Activated naive CD4-positive, alpha-beta T cell treated with anti-CD3 and anti-CD28 coated beads, Interleukin-2, amount 10 ng/mL, durations not matched to agents 7 days and 5 days (primary cell): ENCODE measurements at regions of chr15 and their contacts with region 1.

Region 1: DNA sequence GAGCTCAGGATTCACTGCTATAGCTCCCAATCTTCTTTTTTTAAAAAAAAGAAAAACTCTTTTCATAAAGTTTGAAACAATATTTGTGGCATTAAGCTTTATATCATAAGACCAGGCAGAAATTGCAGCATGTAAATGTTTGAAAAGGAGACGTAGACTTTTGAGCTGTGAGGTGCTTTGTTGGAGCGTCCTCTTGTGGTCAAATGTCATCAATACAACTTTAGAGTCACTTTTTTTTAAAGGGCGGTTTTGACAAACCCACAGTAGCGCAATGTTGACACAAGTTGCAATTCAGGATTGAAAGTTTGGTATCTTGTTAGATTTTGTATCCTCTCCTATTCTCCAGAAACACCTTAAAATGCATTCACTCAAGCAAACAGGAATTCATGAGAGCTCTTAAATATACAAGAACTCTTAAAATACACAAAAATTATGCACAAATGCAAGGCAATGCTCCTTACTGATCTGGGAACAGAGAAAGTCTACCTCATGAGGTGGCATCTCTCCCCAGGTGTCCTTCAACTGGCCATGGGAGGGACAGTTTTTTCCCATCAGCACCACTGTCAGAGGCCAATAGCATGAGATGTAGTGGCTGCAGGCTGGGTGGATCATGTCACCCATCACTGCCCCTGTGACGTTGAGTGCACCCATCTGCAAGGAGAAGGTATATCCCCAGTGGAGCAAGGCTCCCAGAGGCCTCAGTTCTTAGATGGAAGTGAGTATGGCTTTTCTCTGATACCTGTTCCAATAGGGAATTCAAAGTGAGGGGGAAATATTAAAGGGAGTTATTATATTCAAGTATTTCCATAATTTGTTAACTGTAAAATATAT is 70.7 kb downstream of the ANXA2 start:
- DNase-seq: peak; percentile 49
- H3K4me3 Mint-ChIP-seq: no peak overlapping the region
- H3K27ac Mint-ChIP-seq: no peak overlapping the region
- H3K4me1 Mint-ChIP-seq: peaks cover 11% of the 10 kb centered on the region
- H3K27me3 Mint-ChIP-seq: peaks cover 55% of the 10 kb centered on the region

Region 2: GRCh38 chr15:59688841-59689625 is 638.0 kb before region 1 on chr15 and contains the start of gene BNIP2:
- CTCF ChIA-PET with region 1: interaction called, 14 read pairs
- DNase-seq: peak; percentile 100
- H3K4me3 Mint-ChIP-seq: peak within 1 kb of the TSS; percentile 85
- H3K27ac Mint-ChIP-seq: peak within 1 kb of the TSS; percentile 99
- H3K4me1 Mint-ChIP-seq: peaks cover 52% of the 10 kb centered on the region
- H3K27me3 Mint-ChIP-seq: no peaks in the 10 kb centered on the region

Region 3: DNA sequence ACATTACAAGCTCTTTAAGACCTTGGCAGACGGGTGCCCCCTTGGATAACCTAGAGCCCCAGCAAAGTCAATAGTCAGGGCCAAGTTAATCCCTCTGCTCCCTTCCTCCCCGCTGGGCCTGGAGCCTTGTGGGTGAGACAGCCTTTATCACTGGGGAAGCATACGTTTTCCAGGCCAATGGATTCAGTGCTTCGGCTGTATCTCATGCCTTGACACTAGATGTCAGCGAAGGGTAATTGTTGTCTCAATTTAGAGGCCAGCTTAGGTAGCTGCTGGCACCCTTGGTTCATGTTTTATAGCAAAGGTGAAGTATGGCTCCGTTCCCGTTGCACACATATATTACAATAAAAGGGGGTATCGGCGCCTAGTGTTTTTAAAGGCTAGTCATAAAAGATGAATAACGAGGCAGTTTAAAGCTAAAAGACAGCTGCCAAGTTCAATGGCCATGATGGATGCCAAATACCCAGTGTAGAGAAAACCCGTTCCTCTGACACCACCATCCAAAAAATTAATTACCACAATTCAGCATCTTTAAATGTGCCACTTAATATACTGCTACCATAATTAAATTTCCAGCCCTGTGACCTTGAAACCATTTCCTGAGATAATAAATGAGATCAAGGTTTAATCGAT is 585.6 kb before region 1 on chr15:
- CTCF ChIA-PET with region 1: interaction called, 10 read pairs
- DNase-seq: peak; percentile 26
- H3K4me3 Mint-ChIP-seq: no peak overlapping the region
- H3K27ac Mint-ChIP-seq: no peak overlapping the region
- H3K4me1 Mint-ChIP-seq: no peaks in the 10 kb centered on the region
- H3K27me3 Mint-ChIP-seq: peaks cover 17% of the 10 kb centered on the region

Region 4: GRCh38 chr15:59917504-59918157 is 409.4 kb before region 1 on chr15:
- CTCF ChIA-PET with region 1: interaction called, 73 read pairs
- DNase-seq: peak; percentile 82
- H3K4me3 Mint-ChIP-seq: no peak overlapping the region
- H3K27ac Mint-ChIP-seq: no peak overlapping the region
- H3K4me1 Mint-ChIP-seq: peaks cover 34% of the 10 kb centered on the region
- H3K27me3 Mint-ChIP-seq: peaks cover 21% of the 10 kb centered on the region

Region 5: DNA sequence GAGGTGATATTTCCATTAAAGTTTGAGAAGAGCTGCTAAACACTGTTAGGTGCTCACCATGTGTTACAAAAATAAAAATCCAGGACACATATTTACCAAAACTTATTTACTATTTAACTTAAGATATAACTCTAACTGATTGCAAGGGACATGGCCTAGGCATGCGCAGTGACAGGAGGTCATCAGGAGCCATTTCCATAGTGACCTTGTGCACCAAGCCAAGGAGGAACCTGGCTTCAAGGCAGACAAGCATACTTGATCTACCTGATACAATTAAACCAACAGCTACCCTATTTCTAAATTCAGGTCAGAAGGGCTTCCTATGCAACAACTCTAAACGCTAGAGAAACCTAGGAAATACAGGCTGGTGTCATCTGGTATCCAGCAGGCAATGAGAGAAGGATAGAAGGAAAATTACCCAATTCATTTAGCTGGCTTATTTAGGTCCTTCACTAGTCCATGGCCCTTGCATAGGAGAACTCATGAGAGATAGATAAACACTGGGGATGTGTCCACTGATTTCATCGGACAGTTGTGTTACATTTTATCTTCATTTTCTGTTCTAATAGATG is 188.6 kb before region 1 on chr15:
- CTCF ChIA-PET with region 1: no interaction called
- DNase-seq: no peak
- H3K4me3 Mint-ChIP-seq: no peak overlapping the region
- H3K27ac Mint-ChIP-seq: no peak overlapping the region
- H3K4me1 Mint-ChIP-seq: no peaks in the 10 kb centered on the region
- H3K27me3 Mint-ChIP-seq: peaks cover 59% of the 10 kb centered on the region

Region 6: DNA sequence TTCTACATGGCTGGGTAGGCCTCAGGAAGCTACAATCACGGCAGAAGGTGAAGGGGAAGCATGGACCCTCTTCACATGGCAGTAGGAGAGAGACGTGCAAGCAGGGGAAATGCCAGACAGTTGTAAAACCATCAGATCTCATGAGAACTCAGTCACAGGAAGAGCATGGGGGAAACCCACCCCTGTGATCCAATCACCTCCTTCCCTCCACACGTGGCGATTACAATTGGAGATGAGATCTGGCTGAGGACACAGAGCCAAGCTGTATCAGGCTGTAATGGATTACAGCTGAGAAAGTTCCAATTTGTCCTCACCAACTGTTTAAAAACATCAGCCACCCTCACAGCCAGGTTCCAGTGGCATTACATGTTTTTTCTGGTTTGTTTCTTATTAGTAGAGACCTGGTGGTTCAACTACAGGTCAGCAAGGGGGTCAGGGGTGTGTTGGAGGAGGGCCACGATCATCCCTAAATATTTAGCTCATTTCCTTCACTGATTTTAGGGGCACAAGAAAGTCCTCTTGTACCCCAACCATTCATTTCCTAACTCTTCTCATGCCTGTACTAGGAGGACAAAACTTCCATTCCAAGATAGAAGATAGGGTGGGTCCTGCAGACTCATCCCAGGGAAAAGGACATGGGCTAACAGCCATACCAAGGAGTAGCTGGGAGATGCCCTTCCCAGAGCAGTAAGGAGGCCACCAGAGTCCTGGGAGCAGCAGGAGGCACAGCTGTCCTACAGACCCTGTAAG is 16.4 kb after region 1 on chr15:
- CTCF ChIA-PET with region 1: interaction called, 11 read pairs
- DNase-seq: no peak
- H3K4me3 Mint-ChIP-seq: no peak overlapping the region
- H3K27ac Mint-ChIP-seq: no peak overlapping the region
- H3K4me1 Mint-ChIP-seq: no peaks in the 10 kb centered on the region
- H3K27me3 Mint-ChIP-seq: peaks cover 16% of the 10 kb centered on the region